Caco-2 (cell line): ENCODE measurements at regions of chr6 and their contacts with region 1.

Region 1: DNA sequence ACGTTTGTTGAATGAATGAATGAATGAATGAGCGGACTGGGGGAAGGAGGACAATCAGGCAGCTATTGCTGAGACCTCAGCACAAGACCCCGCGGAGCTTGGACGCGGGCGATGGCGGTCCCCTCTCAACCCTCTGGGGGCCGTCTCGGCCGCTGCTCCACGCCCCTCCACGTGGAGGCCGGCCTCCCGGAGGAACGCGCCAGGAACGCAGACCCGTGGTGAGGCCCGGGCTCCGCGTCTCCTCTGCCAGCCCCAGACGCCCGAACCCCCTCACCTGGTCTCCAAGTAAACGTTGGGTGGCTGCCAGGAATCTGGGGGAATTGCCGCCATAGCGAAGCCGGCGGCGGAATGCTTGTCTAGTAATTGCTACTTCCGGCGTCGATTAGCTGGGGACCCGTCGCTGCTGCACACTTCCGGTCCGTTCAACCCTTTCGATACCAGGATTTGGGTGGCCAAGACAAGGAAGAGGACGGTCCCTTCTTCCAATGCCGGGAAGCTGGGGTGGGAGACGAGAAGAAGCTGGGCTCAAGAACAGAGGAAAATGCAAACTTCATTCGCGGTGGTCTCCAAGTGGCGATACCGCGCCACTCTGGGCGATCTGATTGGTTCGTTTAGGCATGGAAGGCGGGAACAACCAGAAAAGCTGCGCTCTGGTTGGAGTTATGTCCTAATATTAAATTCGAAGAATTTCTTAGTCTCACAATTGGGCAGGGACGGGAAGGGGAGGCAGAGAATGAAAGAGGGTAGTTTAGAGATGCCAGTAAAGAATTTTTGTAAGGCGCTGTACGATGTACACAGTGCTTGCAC is at the start of gene PPIL1:
- DNase-seq: peak; percentile 83 to 85
- H3K4me3 ChIP-seq: peak within 1 kb of the TSS; percentile 78
- H3K4me3 Mint-ChIP-seq: peak within 1 kb of the TSS; percentile 92
- H3K27ac Mint-ChIP-seq: peak within 1 kb of the TSS; percentile 98
- H3K4me1 ChIP-seq: 0 out of 2 replicates have a peak, but pooled peaks cover 5% of the 10 kb centered on the region
- H3K4me1 Mint-ChIP-seq: peaks cover 8% of the 10 kb centered on the region
- H3K27me3 ChIP-seq: no peaks in the 10 kb centered on the region
- H3K27me3 Mint-ChIP-seq: no peaks in the 10 kb centered on the region
- CTCF ChIP-seq: peak in 1 of 2 experiments; percentile 14
- total RNA-seq, gene PPIL1: 57.7 and 61.2 TPM in 2 replicates

Region 2: GRCh38 chr6:36786055-36786675 is 88.5 kb before region 1 on chr6:
- CTCF ChIA-PET with region 1: no interaction called
- POLR2A ChIA-PET with region 1: interaction called, 12 read pairs
- intact Hi-C with region 1: no loop called
- DNase-seq: no peak
- H3K4me3 ChIP-seq: no peak overlapping the region
- H3K4me3 Mint-ChIP-seq: no peak overlapping the region
- H3K27ac Mint-ChIP-seq: no peak overlapping the region
- H3K4me1 ChIP-seq: 0 out of 2 replicates have a peak, but pooled peaks cover 3% of the 10 kb centered on the region
- H3K4me1 Mint-ChIP-seq: peaks cover under 1% of the 10 kb centered on the region
- H3K27me3 ChIP-seq: no peaks in the 10 kb centered on the region
- H3K27me3 Mint-ChIP-seq: peaks cover 5% of the 10 kb centered on the region
- CTCF ChIP-seq: no peak

Region 3: GRCh38 chr6:36968266-36968977 is 93.8 kb after region 1 on chr6:
- CTCF ChIA-PET with region 1: no interaction called
- POLR2A ChIA-PET with region 1: no interaction called
- intact Hi-C with region 1: no loop called
- DNase-seq: no peak
- H3K4me3 ChIP-seq: no peak overlapping the region
- H3K4me3 Mint-ChIP-seq: no peak overlapping the region
- H3K27ac Mint-ChIP-seq: no peak overlapping the region
- H3K4me1 ChIP-seq: no peaks in the 10 kb centered on the region
- H3K4me1 Mint-ChIP-seq: no peaks in the 10 kb centered on the region
- H3K27me3 ChIP-seq: no peaks in the 10 kb centered on the region
- H3K27me3 Mint-ChIP-seq: no peaks in the 10 kb centered on the region
- CTCF ChIP-seq: no peak

Region 4: GRCh38 chr6:37177077-37177934 is 302.7 kb after region 1 on chr6:
- CTCF ChIA-PET with region 1: no interaction called
- POLR2A ChIA-PET with region 1: no interaction called
- intact Hi-C with region 1: no loop called
- DNase-seq: no peak
- H3K4me3 ChIP-seq: no peak overlapping the region
- H3K4me3 Mint-ChIP-seq: no peak overlapping the region
- H3K27ac Mint-ChIP-seq: no peak overlapping the region
- H3K4me1 ChIP-seq: no peaks in the 10 kb centered on the region; the same call in 1 of the 2 replicates
- H3K4me1 Mint-ChIP-seq: peaks cover 6% of the 10 kb centered on the region
- H3K27me3 ChIP-seq: no peaks in the 10 kb centered on the region
- H3K27me3 Mint-ChIP-seq: no peaks in the 10 kb centered on the region
- CTCF ChIP-seq: no peak

Region 5: GRCh38 chr6:37838219-37838921 is 963.7 kb after region 1 on chr6:
- CTCF ChIA-PET with region 1: no interaction called
- POLR2A ChIA-PET with region 1: no interaction called
- intact Hi-C with region 1: no loop called
- DNase-seq: no peak
- H3K4me3 ChIP-seq: no peak overlapping the region
- H3K4me3 Mint-ChIP-seq: no peak overlapping the region
- H3K27ac Mint-ChIP-seq: no peak overlapping the region
- H3K4me1 ChIP-seq: no peaks in the 10 kb centered on the region; the same call in 1 of the 2 replicates
- H3K4me1 Mint-ChIP-seq: peaks cover 13% of the 10 kb centered on the region
- H3K27me3 ChIP-seq: no peaks in the 10 kb centered on the region
- H3K27me3 Mint-ChIP-seq: no peaks in the 10 kb centered on the region
- CTCF ChIP-seq: no peak